ENCODE measurements at regions of chr3 and their contacts with region 1.

Region 1: DNA sequence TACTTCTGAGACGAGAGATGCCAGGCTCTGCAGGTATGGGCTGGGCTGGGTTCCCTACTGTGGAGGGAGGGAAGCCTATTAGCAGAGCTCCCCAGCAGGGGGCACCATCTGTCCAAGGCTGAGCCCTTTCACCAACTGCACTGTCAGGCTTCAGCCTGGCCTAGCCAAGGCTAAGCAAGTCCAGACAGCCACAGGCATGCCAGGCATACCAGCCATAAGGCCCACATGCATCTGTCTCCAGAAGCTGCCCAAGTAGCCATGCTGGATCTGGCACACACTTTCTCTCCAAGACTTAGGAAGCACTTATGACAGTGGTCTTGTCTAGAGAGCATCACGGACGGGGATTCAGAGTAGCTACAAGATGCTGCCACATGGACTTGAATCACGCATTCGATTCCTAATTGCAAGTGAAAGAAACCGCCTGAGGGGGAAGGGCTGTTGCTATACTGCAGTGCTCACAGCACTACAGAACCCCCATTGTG is 28.3 kb downstream of the RUVBL1 start:
- DNase-seq: peak; percentile 58
- ATAC-seq: peak; percentile 97
- H3K4me3 Mint-ChIP-seq: no peak overlapping the region
- H3K27ac Mint-ChIP-seq: no peak overlapping the region
- H3K4me1 Mint-ChIP-seq: no peaks in the 10 kb centered on the region
- H3K27me3 Mint-ChIP-seq: no peaks in the 10 kb centered on the region
- CTCF ChIP-seq: no peak

Region 2: GRCh38 chr3:127884041-127884440 is 211.2 kb before region 1 on chr3:
- CTCF ChIA-PET with region 1: no interaction called
- POLR2A ChIA-PET with region 1: no interaction called
- intact Hi-C with region 1: no loop called
- DNase-seq: no peak
- ATAC-seq: no peak
- H3K4me3 Mint-ChIP-seq: no peak overlapping the region
- H3K27ac Mint-ChIP-seq: no peak overlapping the region
- H3K4me1 Mint-ChIP-seq: no peaks in the 10 kb centered on the region
- H3K27me3 Mint-ChIP-seq: no peaks in the 10 kb centered on the region
- CTCF ChIP-seq: no peak

Region 3: DNA sequence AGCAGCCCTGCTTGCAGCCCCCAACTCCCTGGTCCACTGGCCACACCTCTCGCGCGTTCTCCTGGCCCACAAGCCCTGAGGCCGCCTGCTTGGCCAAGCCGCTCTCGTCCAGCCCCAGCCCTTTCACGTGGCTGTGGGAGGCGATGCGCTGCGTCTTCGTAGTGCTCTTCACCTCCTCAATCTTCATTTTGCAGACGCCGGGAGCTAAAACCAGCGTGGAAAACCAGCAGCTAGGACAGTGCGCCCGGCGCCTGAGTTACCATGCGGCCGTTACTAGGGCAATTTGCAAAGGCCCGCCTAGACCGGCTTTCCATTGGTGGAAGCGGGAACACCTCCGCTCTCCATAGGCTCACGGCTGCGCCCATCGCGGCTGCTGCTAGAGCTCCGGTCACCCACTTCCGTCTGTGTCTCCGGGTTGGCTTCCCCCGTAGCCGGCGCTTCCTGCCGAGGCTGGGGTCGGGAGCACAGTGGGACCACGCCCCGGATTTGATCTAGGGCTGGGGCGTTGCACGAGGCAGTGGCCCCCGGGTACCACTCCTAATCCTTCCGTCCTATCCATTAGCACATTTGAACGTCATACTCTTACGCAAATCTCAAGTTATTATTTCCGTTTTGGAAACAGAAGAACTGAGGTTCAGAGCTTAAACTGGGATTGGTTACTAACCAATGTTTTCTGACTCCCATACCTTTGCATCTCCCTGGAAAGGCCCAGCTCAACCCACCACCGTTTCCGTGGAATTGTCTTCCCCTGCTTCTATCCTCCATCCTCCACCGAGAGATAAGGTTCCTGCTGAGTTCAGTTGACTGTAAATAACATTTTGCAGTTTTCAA is 28.5 kb after region 1 on chr3 and contains the start of gene RUVBL1:
- CTCF ChIA-PET with region 1: interaction called, 11 read pairs
- POLR2A ChIA-PET with region 1: interaction called, 9 read pairs
- intact Hi-C with region 1: no loop called
- DNase-seq: peak; percentile 87
- ATAC-seq: peak; percentile 97
- H3K4me3 Mint-ChIP-seq: peak within 1 kb of the TSS; percentile 97
- H3K27ac Mint-ChIP-seq: peak within 1 kb of the TSS; percentile 93
- H3K4me1 Mint-ChIP-seq: peaks cover 23% of the 10 kb centered on the region
- H3K27me3 Mint-ChIP-seq: no peaks in the 10 kb centered on the region
- CTCF ChIP-seq: no peak
- total RNA-seq, gene RUVBL1: 44.8 and 46.6 TPM in 2 replicates

Region 4: DNA sequence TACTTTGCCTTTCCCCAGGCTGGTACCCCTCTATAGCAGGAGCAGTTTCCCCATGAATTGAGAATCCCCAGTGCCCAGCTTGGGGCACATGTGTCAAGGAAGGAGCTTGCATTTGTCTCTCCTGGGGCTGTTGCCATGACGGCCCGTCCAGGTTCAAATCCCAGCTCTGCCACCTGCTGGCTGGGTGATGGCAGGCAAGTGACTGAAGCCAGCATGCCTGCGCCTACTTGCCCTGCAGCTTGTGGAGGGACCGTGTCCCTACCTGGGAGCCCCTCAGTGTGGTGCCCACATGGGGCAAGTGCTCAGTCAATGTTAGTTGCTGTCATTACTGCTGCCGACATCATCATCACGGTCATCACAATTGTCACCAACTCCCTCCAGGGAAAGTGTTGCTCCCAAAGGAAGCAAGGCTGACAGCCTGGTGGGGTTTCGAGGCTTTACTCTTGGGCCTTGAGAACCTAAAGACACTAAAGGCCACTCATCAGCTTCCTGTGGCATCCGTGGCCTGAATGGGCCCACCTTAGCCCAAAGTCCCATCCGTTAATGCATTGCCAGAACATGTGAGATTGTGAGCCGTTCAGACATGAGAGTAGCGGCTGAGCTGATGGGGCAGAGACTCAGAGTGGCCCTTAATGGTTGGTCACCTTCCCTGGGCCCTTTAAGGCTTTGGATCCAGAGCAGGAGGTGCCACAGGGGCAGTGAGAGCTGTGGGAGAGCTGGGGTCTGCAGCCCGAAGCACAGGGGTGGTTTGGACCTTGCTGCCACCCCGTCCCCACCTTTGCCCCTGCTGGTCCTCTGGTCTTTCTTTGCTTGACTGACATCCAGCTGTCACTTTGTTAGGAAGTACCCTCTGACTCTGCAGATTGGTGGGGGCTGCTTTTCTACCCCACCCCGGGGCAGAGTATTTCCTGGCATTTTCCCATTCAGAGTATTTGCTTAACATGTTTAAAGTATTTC is 227.1 kb after region 1 on chr3:
- CTCF ChIA-PET with region 1: no interaction called
- POLR2A ChIA-PET with region 1: no interaction called
- intact Hi-C with region 1: loop called (anchors 1 kb)
- DNase-seq: no peak
- ATAC-seq: no peak
- H3K4me3 Mint-ChIP-seq: no peak overlapping the region
- H3K27ac Mint-ChIP-seq: no peak overlapping the region
- H3K4me1 Mint-ChIP-seq: no peaks in the 10 kb centered on the region
- H3K27me3 Mint-ChIP-seq: no peaks in the 10 kb centered on the region
- CTCF ChIP-seq: no peak

Region 5: GRCh38 chr3:128497387-128498126 is 402.3 kb after region 1 on chr3:
- CTCF ChIA-PET with region 1: interaction called, 9 read pairs
- POLR2A ChIA-PET with region 1: no interaction called
- intact Hi-C with region 1: loop called (anchors 1 kb)
- DNase-seq: peak; percentile 62
- ATAC-seq: peak; percentile 52
- H3K4me3 Mint-ChIP-seq: peak overlapping the region; percentile 74
- H3K27ac Mint-ChIP-seq: no peak overlapping the region
- H3K4me1 Mint-ChIP-seq: peaks cover 9% of the 10 kb centered on the region
- H3K27me3 Mint-ChIP-seq: peaks cover 60% of the 10 kb centered on the region
- CTCF ChIP-seq: no peak

Region 6: DNA sequence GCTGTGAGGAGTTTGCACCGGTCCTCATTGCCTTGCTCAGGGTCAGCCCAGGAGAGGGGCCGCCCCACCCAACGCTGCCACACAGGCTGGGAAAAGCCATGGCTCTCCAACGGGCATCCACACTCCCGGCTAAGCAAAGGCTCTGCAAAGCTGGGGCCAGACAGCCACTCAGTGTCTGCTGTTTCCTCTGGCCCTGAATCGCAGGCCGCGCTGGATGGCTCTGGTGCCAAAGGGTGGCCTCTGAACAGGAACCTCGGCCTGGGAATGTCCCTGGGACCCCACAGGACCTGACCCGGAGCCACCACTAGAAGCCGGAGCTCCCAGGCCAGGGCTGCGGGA is 512.4 kb after region 1 on chr3:
- CTCF ChIA-PET with region 1: interaction called, 5 read pairs
- POLR2A ChIA-PET with region 1: no interaction called
- intact Hi-C with region 1: loop called (anchors 1 kb)
- DNase-seq: no peak
- ATAC-seq: no peak
- H3K4me3 Mint-ChIP-seq: peak overlapping the region; percentile 24
- H3K27ac Mint-ChIP-seq: no peak overlapping the region
- H3K4me1 Mint-ChIP-seq: peaks cover 2% of the 10 kb centered on the region
- H3K27me3 Mint-ChIP-seq: no peaks in the 10 kb centered on the region
- CTCF ChIP-seq: no peak

Measured in activated B cell treated with CpG ODN at 0.5 μM for 24 hours (primary cell).